Activated CD4-positive, alpha-beta T cell treated with anti-CD3 and anti-CD28 coated beads, Interleukin-2, amount 10 ng/mL, durations not matched to agents 24 days and 14 days (primary cell): ENCODE measurements at regions of chr21 and their contacts with region 1.

Region 1: GRCh38 chr21:36028127-36029069 is 31.9 kb downstream of the SETD4 start:
- DNase-seq: peak; percentile 90
- H3K4me3 Mint-ChIP-seq: no peak overlapping the region
- H3K27ac Mint-ChIP-seq: no peak overlapping the region
- H3K4me1 Mint-ChIP-seq: peaks cover 6% of the 10 kb centered on the region
- H3K27me3 Mint-ChIP-seq: no peaks in the 10 kb centered on the region

Region 2: DNA sequence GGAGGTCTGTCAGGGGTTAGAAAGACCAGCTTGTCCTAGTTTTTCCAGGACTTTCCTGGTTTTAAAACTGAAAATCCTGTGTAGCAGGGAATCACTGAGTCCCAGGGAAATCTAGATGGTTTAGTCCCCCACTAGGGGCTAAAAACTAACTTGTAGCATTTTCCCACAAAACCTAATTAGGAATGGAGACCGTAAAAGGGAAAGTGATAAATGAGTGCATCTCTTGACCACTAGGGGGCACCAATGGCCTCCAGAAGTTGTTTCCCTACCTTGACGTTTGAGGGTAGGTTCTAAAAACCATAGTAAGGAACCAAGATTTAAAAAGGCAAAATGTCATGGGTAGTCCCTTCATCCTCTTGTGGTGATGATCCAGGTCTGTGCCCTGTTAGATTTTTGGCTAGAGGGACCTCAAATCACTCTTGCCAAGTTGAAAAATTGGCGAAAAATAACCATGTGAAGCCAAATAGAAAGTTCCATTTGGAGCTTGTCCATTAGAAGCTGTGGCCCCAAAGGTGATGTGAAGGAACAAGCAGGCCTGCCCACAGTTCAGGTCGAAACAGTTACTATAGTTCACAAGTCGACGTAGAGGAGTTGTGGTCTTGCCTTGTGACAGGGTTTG is 1335.1 kb before region 1 on chr21:
- intact Hi-C with region 1: loop called (anchors 1 kb)
- DNase-seq: peak; percentile 83
- H3K4me3 Mint-ChIP-seq: no peak overlapping the region
- H3K27ac Mint-ChIP-seq: no peak overlapping the region
- H3K4me1 Mint-ChIP-seq: peaks cover 2% of the 10 kb centered on the region
- H3K27me3 Mint-ChIP-seq: peaks cover 38% of the 10 kb centered on the region

Region 3: DNA sequence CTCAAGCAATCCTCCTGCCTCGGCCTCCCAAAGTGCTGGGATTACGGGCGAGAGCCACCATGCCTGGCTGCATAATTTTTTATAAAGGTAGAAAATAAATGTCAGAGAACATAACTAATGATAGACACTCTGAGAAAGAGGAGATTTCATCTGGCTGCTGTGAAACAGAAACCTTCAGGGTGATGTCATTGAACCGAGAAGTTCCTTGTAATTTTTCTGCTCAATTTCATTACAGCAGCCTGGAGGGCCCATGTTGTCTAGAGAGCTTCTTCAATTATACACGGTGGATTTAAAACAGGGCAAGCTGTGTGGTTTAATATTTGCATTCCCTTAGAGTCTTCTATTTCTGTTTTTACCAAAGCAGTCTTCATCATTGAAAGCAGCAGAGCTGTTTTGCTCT is 227.3 kb after region 1 on chr21:
- intact Hi-C with region 1: no loop called
- DNase-seq: no peak
- H3K4me3 Mint-ChIP-seq: no peak overlapping the region
- H3K27ac Mint-ChIP-seq: no peak overlapping the region
- H3K4me1 Mint-ChIP-seq: peaks cover 26% of the 10 kb centered on the region
- H3K27me3 Mint-ChIP-seq: no peaks in the 10 kb centered on the region